GM18951 (cell line): ENCODE measurements at regions of chr7 and their contacts with region 1.

Region 1: GRCh38 chr7:82578430-82578829 is 134.9 kb upstream of the CACNA2D1 start:
- POLR2A ChIP-seq: no peak

Region 2: DNA sequence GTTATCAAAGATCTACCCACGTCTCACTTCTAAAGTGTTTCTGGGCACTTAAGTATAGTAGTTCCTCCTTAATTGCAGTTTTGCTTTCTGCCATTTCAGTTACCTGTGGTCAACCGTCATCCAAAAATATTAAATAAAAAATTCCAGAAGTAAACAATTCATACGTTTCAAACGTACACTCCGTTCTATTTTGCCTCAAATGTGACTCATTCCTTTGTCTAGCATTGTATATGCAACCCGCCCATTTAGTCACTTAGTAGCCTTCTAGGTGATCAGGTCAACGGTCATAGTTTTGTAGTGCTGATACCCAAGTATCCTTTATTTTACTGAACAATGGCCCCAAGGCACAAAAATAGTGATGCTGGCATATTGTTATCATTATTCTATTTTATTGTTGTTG is 842.3 kb before region 1 on chr7:
- in situ Hi-C with region 1: no loop called
- POLR2A ChIP-seq: no peak

Region 3: GRCh38 chr7:82044497-82045080 is 533.8 kb before region 1 on chr7:
- in situ Hi-C with region 1: loop called (anchors 25 kb)
- POLR2A ChIP-seq: no peak

Region 4: GRCh38 chr7:82449910-82450309 is 128.5 kb before region 1 on chr7:
- in situ Hi-C with region 1: no loop called
- POLR2A ChIP-seq: no peak